Posterior cingulate gyrus (tissue), 11 donors: ENCODE measurements at regions of chr6 and their contacts with region 1.

Region 1: DNA sequence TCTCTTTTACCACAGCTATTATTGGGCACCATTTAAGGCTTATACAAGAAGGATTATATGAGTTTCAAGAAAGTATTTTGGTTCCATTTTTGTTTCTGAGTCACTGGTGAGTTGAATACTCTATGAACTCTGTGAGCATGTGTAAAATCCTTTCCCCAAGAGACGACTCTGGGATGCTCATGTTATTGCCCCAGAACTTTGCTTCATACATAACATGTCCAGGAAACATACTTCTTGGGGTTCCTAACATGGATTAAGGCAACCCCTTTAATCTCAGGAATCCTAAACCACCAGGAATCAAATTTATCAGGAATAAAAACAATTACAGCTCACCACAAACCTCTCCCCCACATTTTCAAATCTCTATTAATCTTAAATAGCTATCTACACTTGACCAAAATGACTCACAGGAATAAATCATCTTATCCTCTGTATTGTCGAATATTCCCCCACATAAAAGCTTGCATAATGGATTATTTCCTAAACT is 117.5 kb upstream of the COL21A1 start:
- DNase-seq: no peak

Region 2: DNA sequence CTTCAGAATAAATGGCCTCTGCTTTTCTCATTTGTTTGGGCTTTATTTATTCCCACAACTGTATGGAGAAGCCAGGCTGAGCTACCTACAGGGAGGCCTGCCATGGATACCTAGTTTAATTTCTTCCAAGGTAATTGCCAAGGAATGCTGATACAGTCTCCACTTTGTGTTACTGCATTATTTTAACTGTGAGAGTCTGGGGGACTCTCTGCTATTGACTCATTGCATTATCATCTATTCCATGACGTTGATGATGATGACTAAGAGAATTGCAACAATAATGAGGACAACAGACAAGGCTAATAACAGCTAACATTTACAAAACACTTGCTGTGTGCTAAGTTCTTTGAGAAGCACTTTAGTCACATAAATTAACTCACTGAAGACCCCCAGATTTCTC is 29.1 kb before region 1 on chr6:
- intact Hi-C with region 1: no loop called
- DNase-seq: no peak

Region 3: GRCh38 chr6:56451165-56451739 is 86.4 kb after region 1 on chr6:
- intact Hi-C with region 1: loop called (anchors 10 kb)
- DNase-seq: peak in 4 of 10 donors; percentile 12 to 85 (median 34)